ENCODE measurements at regions of chr18 and their contacts with region 1.

Region 1: GRCh38 chr18:37937287-37937686 is 371.7 kb upstream of the CELF4 start:
- DNase-seq: no peak
- ATAC-seq: no peak
- H3K4me3 ChIP-seq: no peak overlapping the region
- H3K27ac ChIP-seq: no peak overlapping the region
- H3K4me1 ChIP-seq: no peaks in the 10 kb centered on the region
- H3K27me3 ChIP-seq: no peaks in the 10 kb centered on the region
- CTCF ChIP-seq: no peak
- EP300 ChIP-seq: no peak
- POLR2A ChIP-seq: no peak
- RAD21 ChIP-seq: no peak

Region 2: DNA sequence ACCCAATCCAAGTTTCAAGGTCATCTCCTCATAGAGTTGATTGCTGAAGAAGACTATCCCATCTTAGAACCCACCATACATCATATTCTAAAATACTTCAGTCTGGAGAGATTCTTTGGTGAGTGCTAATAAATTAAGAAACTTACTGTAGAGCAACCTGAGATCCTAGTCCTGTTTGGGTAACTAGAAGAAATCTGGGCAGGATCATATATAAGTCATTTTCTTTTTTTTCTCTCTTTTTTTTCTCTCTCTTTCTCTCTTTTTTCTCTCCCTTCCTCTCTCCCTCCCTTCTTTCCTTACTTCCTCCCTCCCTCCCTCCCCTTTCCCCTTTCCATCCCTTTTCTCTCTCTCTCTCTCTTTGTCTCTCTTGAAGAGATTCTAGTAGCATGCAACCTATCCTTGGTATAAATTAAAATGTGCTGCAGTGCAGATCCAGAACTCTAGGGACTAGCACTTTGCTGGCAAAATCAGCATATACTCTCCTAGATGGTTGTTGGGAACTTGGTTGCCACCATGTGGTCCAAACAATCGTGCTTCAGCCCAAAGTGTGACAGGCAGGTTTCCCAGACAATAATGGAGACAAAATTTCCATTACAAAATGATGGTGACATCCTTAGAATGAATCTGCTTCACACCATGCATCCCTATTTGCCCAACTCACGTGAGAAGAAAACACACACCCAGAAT is 27.7 kb after region 1 on chr18:
- CTCF ChIA-PET with region 1: no interaction called
- POLR2A ChIA-PET with region 1: no interaction called
- RAD21 ChIA-PET with region 1: no interaction called
- SMC1A ChIA-PET with region 1: no interaction called
- in situ Hi-C with region 1: no loop called
- intact Hi-C with region 1: no loop called
- DNase-seq: no peak
- ATAC-seq: no peak
- H3K4me3 ChIP-seq: no peak overlapping the region
- H3K27ac ChIP-seq: no peak overlapping the region
- H3K4me1 ChIP-seq: no peaks in the 10 kb centered on the region
- H3K27me3 ChIP-seq: no peaks in the 10 kb centered on the region
- CTCF ChIP-seq: no peak
- EP300 ChIP-seq: no peak
- POLR2A ChIP-seq: no peak
- RAD21 ChIP-seq: no peak

Region 3: GRCh38 chr18:37997695-37998094 is 60.4 kb after region 1 on chr18:
- CTCF ChIA-PET with region 1: no interaction called
- POLR2A ChIA-PET with region 1: no interaction called
- RAD21 ChIA-PET with region 1: no interaction called
- SMC1A ChIA-PET with region 1: no interaction called
- in situ Hi-C with region 1: no loop called
- intact Hi-C with region 1: loop called (anchors 10 kb)
- DNase-seq: no peak
- ATAC-seq: no peak
- H3K4me3 ChIP-seq: no peak overlapping the region
- H3K27ac ChIP-seq: no peak overlapping the region
- H3K4me1 ChIP-seq: no peaks in the 10 kb centered on the region
- H3K27me3 ChIP-seq: no peaks in the 10 kb centered on the region
- CTCF ChIP-seq: no peak
- EP300 ChIP-seq: no peak
- POLR2A ChIP-seq: no peak
- RAD21 ChIP-seq: no peak

Region 4: GRCh38 chr18:38010971-38011857 is 73.9 kb after region 1 on chr18:
- CTCF ChIA-PET with region 1: no interaction called
- POLR2A ChIA-PET with region 1: no interaction called
- RAD21 ChIA-PET with region 1: no interaction called
- SMC1A ChIA-PET with region 1: no interaction called
- in situ Hi-C with region 1: no loop called
- intact Hi-C with region 1: no loop called
- DNase-seq: no peak
- ATAC-seq: no peak
- H3K4me3 ChIP-seq: no peak overlapping the region
- H3K27ac ChIP-seq: no peak overlapping the region
- H3K4me1 ChIP-seq: no peaks in the 10 kb centered on the region
- H3K27me3 ChIP-seq: no peaks in the 10 kb centered on the region
- CTCF ChIP-seq: no peak
- EP300 ChIP-seq: no peak
- POLR2A ChIP-seq: no peak
- RAD21 ChIP-seq: no peak